H1 (cell line): ENCODE measurements at regions of chr20 and their contacts with region 1.

Region 1: GRCh38 chr20:46174469-46175128 is 56.5 kb downstream of the CD40 start:
- DNase-seq: peak; percentile 70 to 92
- H3K4me3 ChIP-seq: peak overlapping the region; percentile 9 to 50 (median 20); a peak in 5 of 8 replicates
- H3K27ac ChIP-seq: no peak overlapping the region
- H3K4me1 ChIP-seq: no peaks in the 10 kb centered on the region; a peak in 1 of 7 replicates
- H3K27me3 ChIP-seq: peaks cover 8 to 33% (median 32%) of the 10 kb centered on the region in 4 experiments
- CTCF ChIP-seq: peak; percentile 82 to 88 (median 85)
- EP300 ChIP-seq: no peak; a peak in 1 of 3 replicates
- POLR2A ChIP-seq: no peak
- RAD21 ChIP-seq: peak; percentile 65 to 82

Region 2: GRCh38 chr20:46151936-46152335 is 22.7 kb before region 1 on chr20:
- CTCF ChIA-PET with region 1: interaction called, 233 read pairs
- POLR2A ChIA-PET with region 1: no interaction called
- DNase-seq: peak in 1 of 2 experiments; percentile 82
- H3K4me3 ChIP-seq: no peak overlapping the region
- H3K27ac ChIP-seq: no peak overlapping the region
- H3K4me1 ChIP-seq: peaks cover 0 to 5% (median 0%) of the 10 kb centered on the region in 4 experiments; a peak in 2 of 7 replicates
- H3K27me3 ChIP-seq: no peaks in the 10 kb centered on the region
- CTCF ChIP-seq: peak; percentile 57 to 67 (median 66)
- EP300 ChIP-seq: no peak
- POLR2A ChIP-seq: no peak
- RAD21 ChIP-seq: peak; percentile 28 to 52; a peak in 3 of 4 replicates

Region 3: GRCh38 chr20:46199198-46199597 is 24.6 kb after region 1 on chr20:
- CTCF ChIA-PET with region 1: interaction called, 16 read pairs
- POLR2A ChIA-PET with region 1: no interaction called
- DNase-seq: peak; percentile 41 to 95
- H3K4me3 ChIP-seq: peak overlapping the region; percentile 23 to 56 (median 40); a peak in 6 of 8 replicates
- H3K27ac ChIP-seq: no peak overlapping the region
- H3K4me1 ChIP-seq: peaks cover 0 to 21% (median 6%) of the 10 kb centered on the region in 4 experiments; a peak in 4 of 7 replicates
- H3K27me3 ChIP-seq: peaks cover 0 to 8% (median 0%) of the 10 kb centered on the region in 4 experiments; a peak in 2 of 7 replicates
- CTCF ChIP-seq: no peak
- EP300 ChIP-seq: no peak
- POLR2A ChIP-seq: peak in 1 of 2 experiments; percentile 46; a peak in 1 of 3 replicates
- RAD21 ChIP-seq: no peak

Region 4: DNA sequence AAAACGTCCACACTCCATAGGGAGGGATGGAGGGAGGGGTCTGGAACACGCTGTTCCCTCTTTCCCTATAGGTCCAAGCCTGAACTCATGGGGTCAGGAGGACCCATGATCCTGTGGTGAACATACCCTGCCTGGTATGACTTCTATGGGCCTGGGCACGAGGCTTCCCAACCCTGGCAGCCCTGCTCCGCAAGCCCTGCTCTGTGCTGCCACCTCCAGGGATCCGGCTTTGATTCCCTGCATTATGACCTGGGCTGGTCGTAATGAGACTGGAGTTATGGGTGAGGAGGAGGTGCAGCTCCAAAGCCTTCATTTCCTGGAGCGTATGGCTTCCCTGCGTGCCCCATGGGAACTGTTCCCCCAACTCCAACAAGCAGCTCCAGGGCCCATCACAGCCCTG is 78.8 kb after region 1 on chr20:
- CTCF ChIA-PET with region 1: interaction called, 10 read pairs
- POLR2A ChIA-PET with region 1: no interaction called
- DNase-seq: peak in 1 of 2 experiments; percentile 27
- H3K4me3 ChIP-seq: no peak overlapping the region
- H3K27ac ChIP-seq: no peak overlapping the region
- H3K4me1 ChIP-seq: peaks cover 0 to 9% (median 5%) of the 10 kb centered on the region in 4 experiments; a peak in 5 of 7 replicates
- H3K27me3 ChIP-seq: peaks cover 9 to 38% (median 28%) of the 10 kb centered on the region in 4 experiments
- CTCF ChIP-seq: peak; percentile 72 to 77 (median 73)
- EP300 ChIP-seq: no peak
- POLR2A ChIP-seq: no peak
- RAD21 ChIP-seq: peak; percentile 67 to 75